Caco-2 (cell line): ENCODE measurements at regions of chr3 and their contacts with region 1.

Region 1: GRCh38 chr3:195271116-195271858 is at the start of gene XXYLT1:
- DNase-seq: peak; percentile 92 to 94
- H3K4me3 ChIP-seq: peak within 1 kb of the TSS; percentile 91
- H3K4me3 Mint-ChIP-seq: peak within 1 kb of the TSS; percentile 88
- H3K27ac Mint-ChIP-seq: peak within 1 kb of the TSS; percentile 80
- H3K4me1 ChIP-seq: peaks cover 36% of the 10 kb centered on the region
- H3K4me1 Mint-ChIP-seq: peaks cover 21% of the 10 kb centered on the region
- H3K27me3 ChIP-seq: no peaks in the 10 kb centered on the region
- H3K27me3 Mint-ChIP-seq: no peaks in the 10 kb centered on the region
- CTCF ChIP-seq: peak; percentile 87 to 96
- total RNA-seq, gene XXYLT1: 12.2 and 14.2 TPM in 2 replicates

Region 2: GRCh38 chr3:195286115-195286872 is 15.0 kb after region 1 on chr3:
- CTCF ChIA-PET with region 1: interaction called, 34 read pairs
- POLR2A ChIA-PET with region 1: no interaction called
- intact Hi-C with region 1: loop called (anchors 1 kb)
- DNase-seq: no peak
- H3K4me3 ChIP-seq: no peak overlapping the region
- H3K4me3 Mint-ChIP-seq: peak overlapping the region; percentile 4
- H3K27ac Mint-ChIP-seq: no peak overlapping the region
- H3K4me1 ChIP-seq: peaks cover 56% of the 10 kb centered on the region
- H3K4me1 Mint-ChIP-seq: peaks cover 28% of the 10 kb centered on the region
- H3K27me3 ChIP-seq: no peaks in the 10 kb centered on the region
- H3K27me3 Mint-ChIP-seq: no peaks in the 10 kb centered on the region
- CTCF ChIP-seq: no peak

Region 3: DNA sequence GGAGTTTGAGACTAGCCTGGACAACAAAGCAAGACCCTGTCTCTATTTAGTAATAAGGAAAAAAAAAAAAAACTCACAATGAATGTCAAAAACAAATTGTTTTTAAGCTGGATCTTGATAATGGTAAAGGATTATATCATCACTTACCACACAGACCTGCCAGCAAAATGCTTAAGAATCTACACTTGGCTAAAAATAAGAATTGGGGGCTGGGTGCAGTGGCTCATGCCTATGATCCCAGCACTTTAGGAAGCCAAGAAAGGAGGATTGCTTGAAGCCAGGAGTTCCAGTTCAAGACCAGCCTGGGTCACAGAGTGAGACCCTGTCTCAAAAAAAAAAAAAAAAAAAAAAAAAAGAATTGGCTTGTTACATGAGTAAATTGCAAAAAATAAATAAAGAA is 140.5 kb after region 1 on chr3:
- CTCF ChIA-PET with region 1: no interaction called
- POLR2A ChIA-PET with region 1: no interaction called
- intact Hi-C with region 1: no loop called
- DNase-seq: no peak
- H3K4me3 ChIP-seq: no peak overlapping the region
- H3K4me3 Mint-ChIP-seq: no peak overlapping the region
- H3K27ac Mint-ChIP-seq: no peak overlapping the region
- H3K4me1 ChIP-seq: no peaks in the 10 kb centered on the region
- H3K4me1 Mint-ChIP-seq: no peaks in the 10 kb centered on the region
- H3K27me3 ChIP-seq: no peaks in the 10 kb centered on the region
- H3K27me3 Mint-ChIP-seq: no peaks in the 10 kb centered on the region
- CTCF ChIP-seq: no peak

Region 4: DNA sequence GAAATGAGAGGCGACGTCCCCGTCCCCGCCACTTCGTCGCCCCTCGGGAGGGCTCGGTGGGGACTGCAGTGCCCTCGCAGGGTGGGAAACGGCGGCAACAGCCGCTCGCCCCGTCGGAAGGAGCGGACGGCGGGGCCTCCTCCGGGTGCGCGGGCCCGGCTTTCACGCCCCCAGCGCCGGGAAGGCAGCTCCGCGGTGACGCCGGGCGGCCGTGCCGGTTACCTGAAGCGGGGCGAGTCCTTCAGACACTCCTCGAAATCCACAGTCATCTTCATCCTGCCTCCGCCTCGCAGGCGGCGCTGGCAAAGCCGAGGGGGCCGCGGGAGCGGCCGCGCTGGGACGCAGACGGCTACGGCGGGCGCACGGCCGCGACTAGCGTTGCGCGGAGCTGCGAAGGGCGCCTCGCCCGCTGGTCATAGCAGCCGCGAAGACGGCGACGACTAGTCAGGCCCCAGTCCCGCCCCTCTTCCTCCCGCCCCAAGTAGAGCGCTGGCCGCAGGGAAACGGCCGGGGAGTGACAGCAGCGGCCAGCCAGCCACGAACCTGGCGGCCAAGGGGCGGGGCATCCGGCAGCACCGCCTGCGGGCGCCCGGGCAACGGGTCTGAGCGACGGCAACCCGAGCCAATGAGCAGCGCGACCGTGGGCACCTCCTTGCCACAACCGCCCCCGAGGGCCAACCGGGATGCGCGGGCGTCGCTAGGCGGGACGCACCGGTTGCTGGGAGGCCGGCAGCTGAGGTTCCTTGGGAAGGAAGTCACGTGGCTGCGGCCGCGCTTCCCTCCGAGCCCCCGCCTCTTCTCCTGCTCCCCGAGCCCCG is 171.5 kb after region 1 on chr3 and contains the start of gene ACAP2:
- CTCF ChIA-PET with region 1: interaction called, 9 read pairs
- POLR2A ChIA-PET with region 1: interaction called, 3 read pairs
- intact Hi-C with region 1: loop called (anchors 1 kb)
- DNase-seq: peak; percentile 99 to 100
- H3K4me3 ChIP-seq: peak within 1 kb of the TSS; percentile 91
- H3K4me3 Mint-ChIP-seq: peak within 1 kb of the TSS; percentile 96
- H3K27ac Mint-ChIP-seq: peak within 1 kb of the TSS; percentile 37
- H3K4me1 ChIP-seq: peaks cover 14% of the 10 kb centered on the region; the same call in 1 of the 2 replicates
- H3K4me1 Mint-ChIP-seq: peaks cover 6% of the 10 kb centered on the region
- H3K27me3 ChIP-seq: no peaks in the 10 kb centered on the region
- H3K27me3 Mint-ChIP-seq: no peaks in the 10 kb centered on the region
- CTCF ChIP-seq: no peak
- total RNA-seq, gene ACAP2: 39.9 and 42.9 TPM in 2 replicates

Region 5: DNA sequence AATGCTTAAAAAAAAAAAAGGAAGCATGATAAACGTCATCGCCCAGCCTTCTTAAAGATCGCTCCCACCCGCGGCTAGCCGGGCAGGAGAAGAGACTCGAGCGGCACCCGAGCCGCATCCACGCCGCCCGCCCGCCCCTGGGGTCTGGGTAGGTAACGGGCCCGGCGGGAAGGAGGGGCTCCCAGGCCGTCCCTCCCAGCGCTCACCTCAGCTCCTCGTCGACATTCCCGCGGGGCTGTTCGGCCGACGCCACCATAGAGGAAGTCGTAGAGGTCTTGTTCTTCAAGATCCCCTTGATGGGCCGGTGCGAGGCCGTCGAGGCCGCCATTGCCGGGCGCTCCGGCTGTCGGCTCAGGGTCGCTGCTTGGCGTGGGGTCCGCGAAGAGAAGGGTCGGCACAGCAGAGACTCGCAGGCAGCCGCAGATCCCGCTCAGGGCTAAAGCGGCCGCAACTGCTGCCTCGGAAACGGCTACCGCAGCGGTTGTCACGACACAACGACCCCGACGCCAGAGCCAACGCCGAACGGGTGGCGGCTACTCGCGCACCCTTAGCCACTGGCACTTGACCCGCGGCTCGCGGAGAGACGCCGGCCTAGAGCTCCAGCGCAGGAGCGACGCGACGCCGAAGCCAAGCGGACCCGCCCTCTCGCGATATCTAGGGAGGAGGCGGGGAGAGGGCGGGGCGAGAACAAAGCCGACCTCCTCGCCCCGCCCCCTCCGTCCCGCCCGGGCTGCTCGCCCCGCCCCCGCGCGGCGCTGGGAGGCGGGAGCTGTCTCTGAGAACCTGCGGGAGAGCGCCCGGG is 271.6 kb after region 1 on chr3 and contains the start of gene PPP1R2:
- CTCF ChIA-PET with region 1: interaction called, 13 read pairs
- POLR2A ChIA-PET with region 1: interaction called, 3 read pairs
- intact Hi-C with region 1: no loop called
- DNase-seq: peak; percentile 89 to 94
- H3K4me3 ChIP-seq: peak within 1 kb of the TSS; percentile 79
- H3K4me3 Mint-ChIP-seq: peak within 1 kb of the TSS; percentile 67
- H3K27ac Mint-ChIP-seq: peak within 1 kb of the TSS; percentile 90
- H3K4me1 ChIP-seq: peaks cover 58% of the 10 kb centered on the region
- H3K4me1 Mint-ChIP-seq: peaks cover 30% of the 10 kb centered on the region
- H3K27me3 ChIP-seq: no peaks in the 10 kb centered on the region
- H3K27me3 Mint-ChIP-seq: no peaks in the 10 kb centered on the region
- CTCF ChIP-seq: no peak
- total RNA-seq, gene PPP1R2: 135 and 150 TPM in 2 replicates